Activated T-helper 1 cell treated with anti-CD3 and anti-CD28 coated beads, Interleukin-12 subunit alpha, Interleukin-12 subunit beta, Interleukin-2, Interleukin-4 antibody, amounts not matched to agents 30 ng/mL and 10 ng/mL and 1 ng/mL, durations not matched to agents 14 hours and 24 hours and 36 hours (primary cell): ENCODE measurements at regions of chr1 and their contacts with region 1.

Region 1: DNA sequence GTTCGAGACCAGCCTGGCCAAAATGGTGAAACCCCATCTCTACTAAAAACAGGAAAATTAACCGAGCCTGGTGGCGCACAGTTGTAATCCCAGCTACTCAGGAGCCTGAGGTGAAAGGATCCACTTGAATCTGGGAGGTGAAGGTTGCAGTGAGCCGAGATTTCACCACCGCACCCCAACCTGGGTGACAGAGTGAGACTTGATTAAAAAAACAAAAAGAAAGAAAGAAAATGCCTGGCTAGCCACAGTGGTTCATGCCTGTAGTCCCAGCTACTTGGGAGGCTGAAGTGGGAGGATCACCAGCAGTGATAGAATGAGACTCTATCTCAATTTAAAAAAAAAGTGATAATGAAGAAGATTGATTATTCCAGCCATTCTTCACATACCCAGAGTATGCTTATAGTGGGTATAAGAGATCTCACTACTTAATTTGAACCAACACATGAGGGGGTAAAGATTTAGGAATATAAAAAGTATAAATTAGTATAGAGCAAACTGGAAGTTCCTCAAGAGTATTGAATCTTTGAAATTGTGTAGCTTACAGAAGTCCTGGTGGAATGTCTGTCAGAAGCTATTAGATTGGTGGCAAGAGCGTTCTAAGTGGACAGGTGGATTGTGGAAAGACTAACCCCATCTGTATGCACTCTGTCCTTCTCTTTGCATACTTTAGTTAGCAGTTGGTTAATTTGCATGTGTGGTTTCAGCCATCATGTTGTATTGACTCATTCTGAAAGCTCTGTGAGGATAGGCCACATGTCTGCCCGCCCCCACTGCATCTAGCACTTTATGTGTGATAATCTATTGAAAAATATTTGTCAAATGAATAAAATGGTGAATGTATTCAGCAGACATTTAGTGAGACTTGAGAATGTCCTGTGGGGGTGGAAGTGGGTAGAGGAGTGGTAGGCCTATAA is 25.0 kb downstream of the RLF start:
- DNase-seq: peak; percentile 21
- H3K4me3 Mint-ChIP-seq: peak overlapping the region; percentile 72
- H3K27ac Mint-ChIP-seq: peak overlapping the region; percentile 69
- H3K4me1 Mint-ChIP-seq: peaks cover 62% of the 10 kb centered on the region
- H3K27me3 Mint-ChIP-seq: no peaks in the 10 kb centered on the region

Region 2: GRCh38 chr1:39666772-39667171 is 519.4 kb before region 1 on chr1:
- intact Hi-C with region 1: loop called (anchors 10 kb)
- DNase-seq: peak; percentile 46
- H3K4me3 Mint-ChIP-seq: peak overlapping the region; percentile 23
- H3K27ac Mint-ChIP-seq: peak overlapping the region; percentile 62
- H3K4me1 Mint-ChIP-seq: peaks cover 38% of the 10 kb centered on the region
- H3K27me3 Mint-ChIP-seq: peaks cover 9% of the 10 kb centered on the region

Region 3: GRCh38 chr1:40153073-40153770 is 33.0 kb before region 1 on chr1:
- intact Hi-C with region 1: loop called (anchors 5 kb)
- DNase-seq: peak; percentile 21
- H3K4me3 Mint-ChIP-seq: no peak overlapping the region
- H3K27ac Mint-ChIP-seq: peak overlapping the region; percentile 21
- H3K4me1 Mint-ChIP-seq: peaks cover 13% of the 10 kb centered on the region
- H3K27me3 Mint-ChIP-seq: peaks cover 12% of the 10 kb centered on the region

Region 4: DNA sequence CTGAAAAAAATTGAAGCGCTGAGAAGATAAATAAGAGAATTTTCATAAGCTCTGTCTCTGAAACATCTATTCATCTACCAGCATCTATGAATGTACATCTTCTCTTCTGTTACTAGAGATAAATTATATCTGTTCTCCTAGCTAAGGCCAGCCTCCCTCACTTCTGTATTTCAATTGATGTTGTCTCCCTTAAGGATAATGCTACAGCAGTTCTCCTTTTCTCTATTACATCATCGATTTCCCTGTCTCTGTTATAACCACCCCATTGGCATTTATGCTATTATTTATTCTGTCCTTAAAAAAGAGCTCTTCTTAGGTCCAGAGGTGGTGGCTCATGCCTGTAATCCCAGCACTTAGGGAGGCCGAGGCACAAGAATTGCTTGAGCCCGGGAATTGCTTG is 18.6 kb after region 1 on chr1:
- intact Hi-C with region 1: no loop called
- DNase-seq: no peak
- H3K4me3 Mint-ChIP-seq: no peak overlapping the region
- H3K27ac Mint-ChIP-seq: no peak overlapping the region
- H3K4me1 Mint-ChIP-seq: peaks cover 5% of the 10 kb centered on the region
- H3K27me3 Mint-ChIP-seq: no peaks in the 10 kb centered on the region

Region 5: GRCh38 chr1:40224040-40224439 is 37.8 kb after region 1 on chr1:
- intact Hi-C with region 1: loop called (anchors 2 kb)
- DNase-seq: no peak
- H3K4me3 Mint-ChIP-seq: no peak overlapping the region
- H3K27ac Mint-ChIP-seq: peak overlapping the region; percentile 43
- H3K4me1 Mint-ChIP-seq: peaks cover 26% of the 10 kb centered on the region
- H3K27me3 Mint-ChIP-seq: no peaks in the 10 kb centered on the region

Region 6: DNA sequence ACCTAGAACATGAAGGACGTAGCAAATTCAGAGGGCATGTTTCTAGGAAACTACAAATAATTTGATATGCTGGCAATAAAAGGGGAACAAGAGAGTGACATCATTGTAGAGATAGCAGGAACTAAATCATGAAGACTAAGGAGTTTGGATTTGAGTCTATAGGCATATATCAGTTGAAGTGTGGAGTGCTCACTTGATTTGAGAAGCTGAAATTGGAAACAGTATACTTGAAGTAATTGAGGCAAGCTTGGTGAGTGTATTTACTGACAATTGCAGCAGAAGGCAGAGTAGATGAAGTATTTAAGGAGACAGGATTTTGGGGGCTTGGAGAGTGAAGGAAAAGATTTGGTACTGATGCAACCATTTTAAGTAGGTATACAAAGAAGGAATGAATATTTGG is 55.2 kb after region 1 on chr1:
- intact Hi-C with region 1: loop called (anchors 1 kb)
- DNase-seq: no peak
- H3K4me3 Mint-ChIP-seq: peak overlapping the region; percentile 23
- H3K27ac Mint-ChIP-seq: peak overlapping the region; percentile 94
- H3K4me1 Mint-ChIP-seq: peaks cover 77% of the 10 kb centered on the region
- H3K27me3 Mint-ChIP-seq: no peaks in the 10 kb centered on the region

Region 7: GRCh38 chr1:40264354-40264781 is 78.2 kb after region 1 on chr1:
- intact Hi-C with region 1: loop called (anchors 1 kb)
- DNase-seq: no peak
- H3K4me3 Mint-ChIP-seq: peak overlapping the region; percentile 58
- H3K27ac Mint-ChIP-seq: peak overlapping the region; percentile 88
- H3K4me1 Mint-ChIP-seq: peaks cover 53% of the 10 kb centered on the region
- H3K27me3 Mint-ChIP-seq: no peaks in the 10 kb centered on the region